ENCODE measurements at regions of chr19 and their contacts with region 1.

Region 1: GRCh38 chr19:8245869-8246835 is 37.0 kb downstream of the CERS4 start:
- DNase-seq: no peak
- H3K4me3 ChIP-seq: no peak overlapping the region
- H3K27ac ChIP-seq: no peak overlapping the region
- H3K4me1 ChIP-seq: peaks cover 4% of the 10 kb centered on the region
- H3K27me3 ChIP-seq: no peaks in the 10 kb centered on the region
- CTCF ChIP-seq: no peak
- EP300 ChIP-seq: no peak
- POLR2A ChIP-seq: no peak

Region 2: DNA sequence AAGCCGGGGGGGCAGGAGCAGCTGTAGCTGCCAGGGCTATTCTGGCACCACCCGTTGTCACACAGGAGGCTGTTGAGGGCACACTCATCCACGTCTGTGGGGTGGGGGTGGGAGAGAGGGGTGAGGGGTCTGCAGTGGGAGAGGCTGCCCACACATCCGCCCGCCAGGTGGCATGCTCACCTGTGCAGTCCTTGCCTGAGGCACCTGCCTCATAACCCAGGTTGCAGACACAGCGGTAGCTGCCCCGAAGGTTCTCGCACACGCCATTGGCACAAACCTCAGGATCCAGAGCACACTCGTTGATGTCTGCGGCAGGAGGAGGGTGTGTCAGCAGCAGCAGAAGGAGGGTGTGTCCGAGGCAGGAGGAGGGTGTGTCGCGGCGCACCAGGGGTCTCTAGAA is 117.1 kb before region 1 on chr19:
- intact Hi-C with region 1: no loop called
- DNase-seq: no peak
- H3K4me3 ChIP-seq: no peak overlapping the region
- H3K27ac ChIP-seq: no peak overlapping the region
- H3K4me1 ChIP-seq: no peaks in the 10 kb centered on the region
- H3K27me3 ChIP-seq: no peaks in the 10 kb centered on the region
- CTCF ChIP-seq: no peak
- EP300 ChIP-seq: no peak
- POLR2A ChIP-seq: no peak

Region 3: GRCh38 chr19:9018163-9018875 is 772.2 kb after region 1 on chr19:
- intact Hi-C with region 1: loop called in 1 of 4 experiments (anchors 5 kb)
- DNase-seq: peak in 2 of 5 donors; percentile 15 to 31
- H3K4me3 ChIP-seq: no peak overlapping the region
- H3K27ac ChIP-seq: no peak overlapping the region
- H3K4me1 ChIP-seq: no peaks in the 10 kb centered on the region
- H3K27me3 ChIP-seq: no peaks in the 10 kb centered on the region
- CTCF ChIP-seq: no peak
- EP300 ChIP-seq: no peak
- POLR2A ChIP-seq: no peak

Measured in ovary (tissue), 10 donors.